GM12878 (cell line): ENCODE measurements at regions of chrX and their contacts with region 1.

Region 1: DNA sequence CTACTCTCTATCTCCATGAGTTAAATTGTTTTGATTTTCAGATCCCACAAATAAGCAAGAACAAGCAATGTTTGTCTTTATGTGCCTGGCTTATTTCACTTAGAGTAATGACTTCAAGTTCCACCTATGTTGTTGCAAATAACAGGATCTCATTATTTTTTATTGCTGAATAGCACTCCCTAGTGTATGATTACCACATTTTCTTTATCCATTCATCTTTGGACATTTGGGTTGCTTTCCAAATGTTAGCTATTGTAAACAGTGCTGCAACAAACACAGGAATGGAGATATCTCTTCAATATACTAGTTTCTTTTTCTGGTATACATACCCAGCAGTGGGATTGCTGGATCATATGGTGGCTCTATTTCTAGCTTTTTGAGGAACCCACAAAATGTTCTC is 136.0 kb downstream of the SLITRK2 start:
- DNase-seq: no peak
- ATAC-seq: no peak
- H3K4me3 ChIP-seq: no peak overlapping the region
- H3K27ac ChIP-seq: no peak overlapping the region
- H3K4me1 ChIP-seq: no peaks in the 10 kb centered on the region
- H3K27me3 ChIP-seq: no peaks in the 10 kb centered on the region
- CTCF ChIP-seq: no peak
- EP300 ChIP-seq: no peak
- POLR2A ChIP-seq: no peak
- RAD21 ChIP-seq: no peak

Region 2: GRCh38 chrX:145792281-145792680 is 161.3 kb before region 1 on chrX:
- CTCF ChIA-PET with region 1: no interaction called
- POLR2A ChIA-PET with region 1: no interaction called
- RAD21 ChIA-PET with region 1: no interaction called
- SMC1A ChIA-PET with region 1: no interaction called
- in situ Hi-C with region 1: no loop called
- intact Hi-C with region 1: no loop called
- DNase-seq: no peak
- ATAC-seq: no peak
- H3K4me3 ChIP-seq: no peak overlapping the region
- H3K27ac ChIP-seq: no peak overlapping the region
- H3K4me1 ChIP-seq: no peaks in the 10 kb centered on the region
- H3K27me3 ChIP-seq: no peaks in the 10 kb centered on the region
- CTCF ChIP-seq: no peak
- EP300 ChIP-seq: no peak
- POLR2A ChIP-seq: no peak
- RAD21 ChIP-seq: no peak

Region 3: GRCh38 chrX:146054311-146054710 is 100.7 kb after region 1 on chrX:
- CTCF ChIA-PET with region 1: no interaction called
- POLR2A ChIA-PET with region 1: no interaction called
- RAD21 ChIA-PET with region 1: no interaction called
- SMC1A ChIA-PET with region 1: no interaction called
- in situ Hi-C with region 1: loop called (anchors 25 kb)
- intact Hi-C with region 1: no loop called
- DNase-seq: no peak
- ATAC-seq: no peak
- H3K4me3 ChIP-seq: no peak overlapping the region
- H3K27ac ChIP-seq: no peak overlapping the region
- H3K4me1 ChIP-seq: no peaks in the 10 kb centered on the region
- H3K27me3 ChIP-seq: no peaks in the 10 kb centered on the region
- CTCF ChIP-seq: no peak
- EP300 ChIP-seq: no peak
- POLR2A ChIP-seq: no peak
- RAD21 ChIP-seq: no peak